ENCODE measurements at regions of chr1 and their contacts with region 1.

Region 1: DNA sequence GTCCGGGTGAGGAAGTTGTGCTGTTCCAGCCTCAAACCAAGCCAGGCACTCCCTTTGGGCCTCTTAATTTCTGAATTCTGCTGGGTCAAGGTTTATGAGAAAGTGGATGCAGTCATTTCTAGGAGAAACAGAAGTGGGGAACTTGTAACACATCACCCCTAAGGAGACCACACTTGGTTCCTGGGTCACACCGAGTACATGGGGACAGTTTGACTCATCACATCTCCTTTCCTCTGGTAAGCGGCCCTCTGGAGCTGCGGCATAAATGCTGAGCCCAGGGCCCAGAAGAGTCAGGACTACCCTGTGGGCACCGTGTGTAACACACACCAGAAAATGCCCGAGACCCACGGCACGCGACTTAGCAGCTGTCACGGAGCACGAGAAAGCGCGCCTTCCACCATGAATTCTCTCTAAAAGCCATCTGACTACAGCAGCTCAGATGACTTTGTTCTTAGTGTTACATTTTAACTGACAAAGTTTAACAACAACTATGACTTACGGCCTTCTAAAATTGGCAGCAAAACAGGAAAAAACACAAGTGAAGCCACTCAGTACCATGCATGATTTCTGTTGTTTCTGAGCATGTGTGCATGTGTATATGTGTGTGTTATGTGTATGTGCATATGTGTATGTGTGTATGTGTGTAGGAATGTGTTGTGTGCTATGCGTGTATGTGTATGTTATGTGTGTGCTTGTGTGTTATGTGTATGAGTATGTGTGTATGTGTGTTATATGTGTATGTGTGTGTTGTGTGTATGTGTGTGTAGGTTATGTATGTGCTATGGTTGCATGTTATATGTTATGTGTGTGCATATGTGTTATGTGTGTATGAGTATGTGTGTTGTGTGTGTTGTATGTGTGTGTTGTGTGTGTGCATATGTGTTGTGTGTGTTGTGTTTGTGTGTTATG is 50.8 kb downstream of the TOMM20 start:
- DNase-seq: no peak
- H3K4me3 ChIP-seq: no peak overlapping the region
- H3K27ac ChIP-seq: no peak overlapping the region
- H3K4me1 ChIP-seq: peaks cover 0 to 6% (median 2%) of the 10 kb centered on the region in 4 experiments; a peak in 3 of 7 replicates
- H3K27me3 ChIP-seq: no peaks in the 10 kb centered on the region
- CTCF ChIP-seq: no peak
- EP300 ChIP-seq: no peak
- POLR2A ChIP-seq: no peak
- RAD21 ChIP-seq: no peak

Region 2: DNA sequence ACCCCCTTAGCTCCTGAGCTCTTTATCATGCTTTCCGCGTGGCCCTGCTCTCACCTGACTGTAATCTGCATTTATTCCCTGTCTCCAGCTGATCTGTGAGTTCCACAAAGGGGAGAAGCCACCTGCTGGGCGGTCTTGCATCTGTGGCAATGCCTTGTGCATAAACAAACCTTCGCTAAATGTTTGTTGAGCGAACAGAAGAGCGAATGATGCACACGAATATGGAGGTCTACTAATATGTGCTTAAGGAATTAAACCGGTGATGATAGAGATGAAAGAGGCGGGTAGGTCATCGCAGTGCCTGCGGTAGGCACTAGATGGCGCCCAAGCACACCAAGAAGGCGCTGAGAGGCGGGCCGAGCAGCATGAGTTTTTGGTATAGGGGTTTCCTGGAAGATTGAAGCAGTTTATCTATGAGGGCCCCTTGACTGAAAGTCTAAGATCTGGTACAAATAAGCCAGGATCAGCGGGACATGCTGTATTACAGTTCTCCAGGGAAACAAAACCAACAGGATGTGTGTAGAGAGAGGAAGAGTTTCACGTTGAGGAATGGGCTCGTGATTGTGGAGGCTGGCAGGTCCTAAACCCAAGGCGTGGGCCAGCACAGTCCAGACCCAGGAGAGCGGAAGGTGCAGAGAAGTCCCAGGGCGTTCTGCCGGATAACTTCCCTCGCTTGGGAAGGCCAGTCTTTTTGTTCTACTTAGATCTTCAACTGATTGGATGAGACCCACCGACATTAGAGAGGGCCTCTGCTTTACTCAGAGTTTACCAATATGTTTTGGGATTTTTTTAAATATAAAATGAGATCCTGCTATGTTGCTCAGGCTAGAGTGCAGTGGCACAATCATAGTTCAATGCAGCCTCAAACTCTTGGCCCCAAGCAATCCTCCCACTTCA is 16.1 kb after region 1 on chr1:
- CTCF ChIA-PET with region 1: interaction called, 18 read pairs
- POLR2A ChIA-PET with region 1: no interaction called
- DNase-seq: peak in 1 of 2 experiments; percentile 95
- H3K4me3 ChIP-seq: peak overlapping the region in 3 of 4 experiments; percentile 20 to 46 (median 33); a peak in 5 of 8 replicates
- H3K27ac ChIP-seq: no peak overlapping the region
- H3K4me1 ChIP-seq: peaks cover 2 to 24% (median 20%) of the 10 kb centered on the region in 4 experiments
- H3K27me3 ChIP-seq: no peaks in the 10 kb centered on the region
- CTCF ChIP-seq: peak; percentile 72 to 88 (median 85)
- EP300 ChIP-seq: no peak
- POLR2A ChIP-seq: no peak
- RAD21 ChIP-seq: peak; percentile 79 to 82